WTC11 (cell line): ENCODE measurements at regions of chr2 and their contacts with region 1.

Region 1: DNA sequence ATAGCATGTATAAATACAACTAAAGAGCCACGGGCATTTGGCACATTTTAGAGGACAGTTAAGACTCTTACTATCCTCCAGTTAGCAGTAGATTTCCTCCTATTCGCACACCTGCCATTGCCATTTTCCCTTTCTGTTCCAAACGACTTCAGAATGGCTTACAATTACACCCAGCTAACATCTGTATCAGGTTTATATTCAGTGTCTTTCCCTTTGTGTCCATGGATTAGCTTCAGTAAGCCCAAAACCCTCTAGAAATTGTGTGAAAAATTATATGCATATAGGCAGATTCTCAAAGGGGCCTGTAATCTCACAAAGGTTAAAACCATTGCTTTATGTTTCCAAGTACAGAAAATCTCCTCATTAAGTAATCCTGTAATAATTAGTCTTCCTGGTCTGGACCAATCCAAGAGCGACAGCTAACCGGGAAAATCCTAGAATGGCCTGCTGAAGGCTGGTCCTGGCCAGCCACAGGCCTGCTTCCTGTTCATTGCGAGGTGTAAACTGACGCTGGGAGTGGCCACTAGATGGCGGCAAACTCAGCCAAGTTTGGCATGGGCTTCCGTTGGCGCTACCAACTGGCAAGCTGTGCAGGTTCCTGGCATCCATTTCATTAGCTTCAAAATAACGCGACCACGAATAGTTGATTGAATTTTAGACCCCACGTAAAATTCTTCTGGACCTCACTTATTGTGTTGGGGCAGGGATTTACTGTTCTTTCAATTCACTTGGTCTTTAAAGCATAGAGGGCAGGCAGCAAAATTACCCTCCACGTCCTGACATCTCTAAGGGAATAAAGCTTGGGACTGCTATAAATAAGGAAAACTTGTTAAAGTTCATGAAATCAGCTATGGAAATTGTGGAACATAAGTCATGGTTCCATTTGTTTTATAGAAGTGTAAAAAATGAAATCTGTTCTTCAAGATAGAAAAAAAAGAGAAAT is 17.1 kb downstream of the ARHGAP25 start:
- DNase-seq: peak; percentile 93
- ATAC-seq: peak; percentile 95
- H3K4me3 Mint-ChIP-seq: no peak overlapping the region
- H3K27ac Mint-ChIP-seq: 0 out of 2 replicates have a peak overlapping the region, but pooled peaks have one; percentile 41
- H3K4me1 Mint-ChIP-seq: peaks cover 16% of the 10 kb centered on the region
- H3K27me3 Mint-ChIP-seq: no peaks in the 10 kb centered on the region
- CTCF ChIP-seq: peak; percentile 84

Region 2: DNA sequence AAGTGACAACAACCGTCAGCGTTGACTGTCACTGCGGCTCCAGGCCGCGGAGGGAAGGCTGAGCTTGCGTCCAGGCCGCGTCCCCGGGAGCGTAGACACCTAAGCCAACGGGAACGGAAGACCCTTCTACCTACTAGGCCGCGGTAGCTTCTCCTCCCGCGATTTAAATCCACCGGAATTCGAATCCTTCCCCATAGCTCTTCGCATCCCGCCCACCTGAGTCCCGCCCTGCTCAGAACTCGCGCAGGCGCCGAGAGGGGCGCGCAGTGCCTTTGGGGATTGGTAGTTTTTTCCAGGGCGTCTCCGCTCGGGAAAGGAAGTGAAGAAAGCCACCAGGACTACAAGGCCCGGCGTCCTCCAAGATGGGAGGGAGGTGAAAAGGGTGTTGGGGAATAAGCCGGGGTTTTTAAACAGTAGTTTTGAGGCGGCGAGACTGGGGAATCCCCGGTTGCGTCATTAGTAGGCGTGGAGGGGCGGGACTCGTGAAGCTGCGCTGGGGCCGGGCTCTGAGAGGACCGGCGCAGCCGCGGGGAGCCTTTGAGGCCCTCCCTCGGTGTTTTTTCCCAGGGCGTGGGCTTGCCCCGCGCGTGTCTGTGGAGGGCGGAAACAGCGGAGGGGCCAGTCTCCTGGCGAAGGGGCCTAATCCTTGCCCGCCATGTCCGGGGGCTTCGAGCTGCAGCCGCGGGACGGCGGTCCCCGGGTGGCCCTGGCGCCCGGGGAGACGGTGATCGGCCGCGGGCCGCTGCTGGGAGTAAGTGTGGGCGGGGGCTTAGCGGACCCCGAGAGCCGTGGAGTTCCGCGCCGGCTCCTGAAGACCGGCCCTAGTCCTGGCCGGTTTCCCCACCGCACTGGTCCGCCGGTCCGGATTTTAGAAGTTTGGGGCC is 284.3 kb before region 1 on chr2 and contains the starts of genes APLF and FBXO48:
- CTCF ChIA-PET with region 1: interaction called, 19 read pairs
- POLR2A ChIA-PET with region 1: no interaction called
- DNase-seq: peak; percentile 94
- ATAC-seq: peak; percentile 99
- H3K4me3 Mint-ChIP-seq: peak within 1 kb of the TSS; percentile 97
- H3K27ac Mint-ChIP-seq: peak within 1 kb of the TSS; percentile 77
- H3K4me1 Mint-ChIP-seq: peaks cover 10% of the 10 kb centered on the region; the same call in 1 of the 2 replicates
- H3K27me3 Mint-ChIP-seq: no peaks in the 10 kb centered on the region
- CTCF ChIP-seq: no peak
- total RNA-seq, gene APLF: 2.7 to 4.0 TPM (median 3.9 TPM) in 3 replicates
- total RNA-seq, gene FBXO48: 1.3 to 1.5 TPM (median 1.3 TPM) in 3 replicates

Region 3: GRCh38 chr2:68620772-68621171 is 130.9 kb before region 1 on chr2:
- CTCF ChIA-PET with region 1: no interaction called
- POLR2A ChIA-PET with region 1: no interaction called
- DNase-seq: no peak
- ATAC-seq: no peak
- H3K4me3 Mint-ChIP-seq: no peak overlapping the region
- H3K27ac Mint-ChIP-seq: no peak overlapping the region
- H3K4me1 Mint-ChIP-seq: no peaks in the 10 kb centered on the region
- H3K27me3 Mint-ChIP-seq: no peaks in the 10 kb centered on the region
- CTCF ChIP-seq: no peak

Region 4: GRCh38 chr2:68737711-68738110 is 14.0 kb before region 1 on chr2:
- CTCF ChIA-PET with region 1: interaction called, 12 read pairs
- POLR2A ChIA-PET with region 1: no interaction called
- DNase-seq: no peak
- ATAC-seq: no peak
- H3K4me3 Mint-ChIP-seq: no peak overlapping the region
- H3K27ac Mint-ChIP-seq: no peak overlapping the region
- H3K4me1 Mint-ChIP-seq: peaks cover 8% of the 10 kb centered on the region
- H3K27me3 Mint-ChIP-seq: no peaks in the 10 kb centered on the region
- CTCF ChIP-seq: no peak

Region 5: DNA sequence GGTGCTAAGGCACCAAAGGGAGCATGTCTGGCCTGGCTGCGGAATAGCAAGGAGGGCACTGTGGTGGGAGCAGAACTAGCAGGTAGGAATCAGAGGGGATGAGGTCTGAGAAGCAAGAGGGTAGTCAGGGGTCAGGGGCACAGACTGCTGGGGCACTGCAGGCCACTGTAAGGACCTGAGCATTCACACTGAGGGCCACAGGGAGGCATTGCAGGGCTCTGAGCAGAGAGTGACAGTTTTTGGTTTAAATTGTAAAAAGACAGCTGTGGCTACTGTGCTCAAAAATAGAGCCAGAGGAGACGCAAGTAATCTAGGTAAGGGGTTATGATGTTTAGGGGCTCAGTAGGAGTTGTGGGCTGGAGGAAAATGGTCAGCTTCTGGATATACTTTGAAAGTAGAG is 24.5 kb after region 1 on chr2:
- CTCF ChIA-PET with region 1: interaction called, 11 read pairs
- POLR2A ChIA-PET with region 1: no interaction called
- DNase-seq: no peak
- ATAC-seq: peak; percentile 70
- H3K4me3 Mint-ChIP-seq: no peak overlapping the region
- H3K27ac Mint-ChIP-seq: no peak overlapping the region; the same call in 1 of the 2 replicates
- H3K4me1 Mint-ChIP-seq: no peaks in the 10 kb centered on the region
- H3K27me3 Mint-ChIP-seq: no peaks in the 10 kb centered on the region
- CTCF ChIP-seq: no peak

Region 6: DNA sequence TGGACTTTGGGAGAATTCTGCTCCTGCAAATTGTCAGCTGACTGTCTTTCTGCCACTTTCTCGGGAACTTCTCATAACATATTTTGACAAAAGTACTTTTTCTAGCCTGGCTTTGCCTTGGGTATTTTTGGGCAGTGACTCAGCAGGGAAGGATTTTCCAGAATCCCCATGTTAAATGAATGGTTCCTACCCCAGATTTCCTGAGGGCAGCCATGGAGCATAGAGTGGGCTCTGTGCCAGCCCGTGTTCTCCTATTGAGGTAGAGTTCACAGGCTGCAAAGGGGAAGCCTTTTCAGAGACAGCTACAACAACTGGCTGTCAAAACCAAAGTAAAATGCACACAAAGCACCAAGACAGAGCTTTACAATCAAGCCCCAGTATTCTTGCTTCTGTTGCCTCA is 59.7 kb after region 1 on chr2:
- CTCF ChIA-PET with region 1: interaction called, 12 read pairs
- POLR2A ChIA-PET with region 1: no interaction called
- DNase-seq: no peak
- ATAC-seq: no peak
- H3K4me3 Mint-ChIP-seq: no peak overlapping the region
- H3K27ac Mint-ChIP-seq: no peak overlapping the region
- H3K4me1 Mint-ChIP-seq: peaks cover 13% of the 10 kb centered on the region
- H3K27me3 Mint-ChIP-seq: no peaks in the 10 kb centered on the region
- CTCF ChIP-seq: no peak

Region 7: GRCh38 chr2:68901199-68901960 is 149.7 kb after region 1 on chr2:
- CTCF ChIA-PET with region 1: interaction called, 19 read pairs
- POLR2A ChIA-PET with region 1: no interaction called
- DNase-seq: peak; percentile 21
- ATAC-seq: peak; percentile 95
- H3K4me3 Mint-ChIP-seq: no peak overlapping the region
- H3K27ac Mint-ChIP-seq: no peak overlapping the region
- H3K4me1 Mint-ChIP-seq: no peaks in the 10 kb centered on the region
- H3K27me3 Mint-ChIP-seq: no peaks in the 10 kb centered on the region; the same call in none of the 2 replicates
- CTCF ChIP-seq: no peak

Region 8: GRCh38 chr2:68925295-68925896 is 173.7 kb after region 1 on chr2:
- CTCF ChIA-PET with region 1: interaction called, 47 read pairs
- POLR2A ChIA-PET with region 1: no interaction called
- DNase-seq: peak; percentile 38
- ATAC-seq: peak; percentile 90
- H3K4me3 Mint-ChIP-seq: no peak overlapping the region
- H3K27ac Mint-ChIP-seq: no peak overlapping the region
- H3K4me1 Mint-ChIP-seq: peaks cover 5% of the 10 kb centered on the region
- H3K27me3 Mint-ChIP-seq: no peaks in the 10 kb centered on the region
- CTCF ChIP-seq: peak; percentile 63